Calu3 (cell line): ENCODE measurements at regions of chr12 and their contacts with region 1.

Region 1: GRCh38 chr12:89701606-89702206 is 6.9 kb downstream of the ATP2B1 start:
- DNase-seq: no peak
- H3K4me3 Mint-ChIP-seq: no peak overlapping the region
- H3K27ac Mint-ChIP-seq: no peak overlapping the region
- H3K4me1 Mint-ChIP-seq: peaks cover 74% of the 10 kb centered on the region
- H3K27me3 Mint-ChIP-seq: no peaks in the 10 kb centered on the region
- CTCF ChIP-seq: no peak

Region 2: GRCh38 chr12:89576572-89577220 is 125.0 kb before region 1 on chr12:
- CTCF ChIA-PET with region 1: no interaction called
- intact Hi-C with region 1: no loop called
- DNase-seq: no peak
- H3K4me3 Mint-ChIP-seq: no peak overlapping the region
- H3K27ac Mint-ChIP-seq: no peak overlapping the region
- H3K4me1 Mint-ChIP-seq: no peaks in the 10 kb centered on the region
- H3K27me3 Mint-ChIP-seq: no peaks in the 10 kb centered on the region
- CTCF ChIP-seq: no peak

Region 3: GRCh38 chr12:89632778-89633177 is 68.9 kb before region 1 on chr12:
- CTCF ChIA-PET with region 1: interaction called, 8 read pairs
- intact Hi-C with region 1: loop called (anchors 5 kb)
- DNase-seq: no peak
- H3K4me3 Mint-ChIP-seq: no peak overlapping the region
- H3K27ac Mint-ChIP-seq: no peak overlapping the region
- H3K4me1 Mint-ChIP-seq: peaks cover 47% of the 10 kb centered on the region
- H3K27me3 Mint-ChIP-seq: no peaks in the 10 kb centered on the region
- CTCF ChIP-seq: no peak

Region 4: DNA sequence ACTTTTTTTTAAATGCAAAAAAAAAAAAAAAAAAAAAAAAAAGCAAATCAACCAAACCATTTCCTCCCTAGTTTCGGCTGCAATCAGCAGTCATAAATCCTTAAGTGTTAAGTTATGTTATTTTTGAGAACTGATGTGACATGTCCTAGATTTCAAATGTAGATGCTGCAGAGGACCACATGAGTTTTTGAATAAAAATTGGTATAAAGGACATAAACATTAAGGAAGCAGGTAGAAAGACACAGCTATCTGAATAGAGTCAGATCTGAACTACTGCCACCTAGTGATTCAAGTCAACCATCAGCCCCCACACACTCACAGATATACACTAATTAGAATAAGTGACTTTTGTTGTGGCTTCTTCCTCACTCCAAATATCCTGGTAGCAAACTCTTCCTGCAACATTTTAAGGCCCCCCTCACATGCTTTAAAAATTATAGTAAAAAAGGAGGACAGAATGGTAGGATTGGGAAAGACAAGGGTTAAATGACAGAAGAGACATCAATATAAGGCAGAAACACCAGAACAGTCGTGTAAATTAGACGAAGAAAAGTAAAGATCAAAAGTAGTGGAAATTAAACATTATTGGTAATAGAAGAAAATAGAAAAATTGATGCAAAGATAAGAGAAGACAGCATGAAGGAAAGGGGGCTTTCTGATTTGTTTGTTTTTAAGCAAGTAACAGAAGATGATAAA is 401.4 kb after region 1 on chr12:
- CTCF ChIA-PET with region 1: no interaction called
- intact Hi-C with region 1: loop called (anchors 2 kb)
- DNase-seq: peak; percentile 12
- H3K4me3 Mint-ChIP-seq: no peak overlapping the region
- H3K27ac Mint-ChIP-seq: no peak overlapping the region
- H3K4me1 Mint-ChIP-seq: peaks cover 40% of the 10 kb centered on the region
- H3K27me3 Mint-ChIP-seq: no peaks in the 10 kb centered on the region
- CTCF ChIP-seq: peak; percentile 41